ENCODE measurements at regions of chr10 and their contacts with region 1.

Region 1: GRCh38 chr10:78432583-78432982 is 398.9 kb downstream of the RPS24 start:
- DNase-seq: peak; percentile 69
- ATAC-seq: peak; percentile 79
- H3K4me3 ChIP-seq: no peak overlapping the region
- H3K27ac ChIP-seq: no peak overlapping the region
- H3K4me1 ChIP-seq: peaks cover 13% of the 10 kb centered on the region
- H3K27me3 ChIP-seq: peaks cover 39% of the 10 kb centered on the region
- CTCF ChIP-seq: peak; percentile 78

Region 2: DNA sequence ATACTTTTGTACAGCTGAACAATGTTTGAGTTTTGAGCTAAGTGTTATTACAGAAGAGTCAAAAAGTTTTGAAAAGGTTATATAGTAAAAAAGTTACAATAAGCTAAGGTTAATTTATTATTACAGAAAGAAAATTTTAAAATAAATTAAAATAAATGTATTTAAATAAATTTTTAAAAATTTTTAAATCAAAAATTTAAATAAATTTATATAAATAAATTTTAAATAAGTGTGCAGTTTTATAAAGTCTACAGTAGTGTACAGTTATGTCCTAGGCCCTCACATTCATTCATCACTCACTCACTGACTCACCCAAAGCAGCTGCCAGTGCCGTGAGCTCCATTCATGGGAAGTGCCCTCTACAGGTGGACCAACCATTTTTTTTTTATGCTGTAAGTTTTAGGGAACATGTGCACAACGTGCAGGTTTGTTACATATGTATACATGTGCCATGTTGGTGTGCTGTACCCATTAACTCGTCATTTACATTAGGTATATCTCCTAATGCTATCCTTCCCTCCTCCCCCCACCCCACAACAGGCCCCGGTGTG is 173.3 kb after region 1 on chr10:
- CTCF ChIA-PET with region 1: no interaction called
- POLR2A ChIA-PET with region 1: no interaction called
- intact Hi-C with region 1: loop called (anchors 1 kb)
- DNase-seq: peak; percentile 99
- ATAC-seq: peak; percentile 100
- H3K4me3 ChIP-seq: no peak overlapping the region
- H3K27ac ChIP-seq: no peak overlapping the region
- H3K4me1 ChIP-seq: no peaks in the 10 kb centered on the region
- H3K27me3 ChIP-seq: 0 out of 2 replicates have a peak, but pooled peaks cover 5% of the 10 kb centered on the region
- CTCF ChIP-seq: peak; percentile 70